SK-N-SH (cell line): ENCODE measurements at regions of chr15 and their contacts with region 1.

Region 1: DNA sequence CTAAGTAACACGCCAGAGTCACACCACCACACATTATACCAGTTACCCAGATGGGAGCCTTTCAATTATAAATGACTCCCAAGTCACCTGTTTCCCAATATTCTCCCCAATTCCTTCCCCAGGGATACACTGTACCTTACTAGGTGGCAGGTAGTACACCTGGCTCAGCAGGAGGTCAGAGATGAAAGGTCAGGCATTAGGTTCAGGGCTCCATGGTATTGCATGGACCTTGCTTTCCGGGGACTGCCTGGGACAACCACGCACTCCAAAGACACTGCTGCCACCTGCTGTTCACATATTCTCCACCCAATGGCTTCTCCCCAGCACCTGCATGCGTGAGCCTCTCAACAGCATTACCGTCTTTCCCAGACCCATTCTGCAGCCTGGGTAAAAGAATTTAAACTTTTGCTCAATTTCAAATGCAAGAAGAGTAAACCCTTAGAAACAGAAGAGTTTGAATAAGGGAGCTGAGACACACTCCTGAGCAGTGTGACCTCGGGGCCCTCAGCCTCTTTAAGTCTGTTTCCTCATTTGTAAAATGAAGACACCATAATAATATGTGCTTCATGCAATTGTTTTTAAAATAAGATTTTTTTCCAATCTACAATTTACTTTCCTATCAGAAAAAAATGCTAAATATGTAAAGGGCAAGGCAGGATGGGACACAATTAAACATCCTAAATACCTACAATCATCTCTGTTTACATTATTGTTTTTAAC is 28.0 kb upstream of the LACTB start:
- DNase-seq: peak; percentile 87
- H3K4me3 ChIP-seq: no peak overlapping the region; a peak in 1 of 4 replicates
- H3K27ac ChIP-seq: peak overlapping the region; percentile 68 to 78; a peak in 3 of 4 replicates
- H3K4me1 ChIP-seq: peaks cover 21 to 25% of the 10 kb centered on the region in 2 experiments; a peak in 3 of 4 replicates
- H3K27me3 ChIP-seq: no peaks in the 10 kb centered on the region
- CTCF ChIP-seq: peak; percentile 88
- EP300 ChIP-seq: no peak
- RAD21 ChIP-seq: peak; percentile 100

Region 2: DNA sequence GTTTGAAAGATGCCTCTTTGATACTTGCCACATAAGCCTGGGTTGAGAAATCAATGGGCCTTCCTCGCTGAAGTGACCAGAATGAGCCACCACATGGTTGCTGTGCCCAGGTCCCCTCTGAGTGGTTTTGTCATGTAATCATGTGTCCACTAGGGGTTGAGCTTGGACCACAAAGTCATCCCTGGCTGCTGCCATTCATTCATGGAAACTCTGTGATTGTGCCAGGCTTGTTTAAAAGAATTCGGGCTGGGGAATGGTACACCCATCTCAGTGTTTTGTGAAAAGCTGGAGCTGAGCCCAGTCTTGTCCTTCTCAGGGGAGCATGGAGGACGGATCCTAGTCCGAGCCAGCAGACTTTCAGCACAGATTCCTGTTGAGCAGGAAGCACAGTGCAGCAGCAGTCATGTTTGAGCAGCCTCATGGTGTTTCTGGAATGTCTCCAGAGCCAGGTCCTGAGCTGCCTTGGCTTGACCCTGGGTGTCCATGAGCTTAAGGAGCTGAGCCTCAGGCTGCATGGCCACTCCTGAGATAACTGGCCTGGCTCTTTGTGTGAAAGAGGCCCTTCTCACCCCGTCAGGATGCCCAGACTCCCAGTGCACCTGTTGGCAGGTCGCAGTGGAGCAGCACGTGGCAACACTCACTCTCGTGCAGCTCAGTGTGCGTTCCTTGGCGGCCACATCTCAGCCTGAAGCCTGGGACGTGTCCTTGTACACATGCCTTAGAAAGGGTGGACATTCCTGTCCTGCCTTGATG is 311.4 kb before region 1 on chr15:
- CTCF ChIA-PET with region 1: interaction called, 58 read pairs
- POLR2A ChIA-PET with region 1: interaction called, 4 read pairs
- DNase-seq: peak; percentile 83
- H3K4me3 ChIP-seq: no peak overlapping the region
- H3K27ac ChIP-seq: peak overlapping the region; percentile 76 to 96
- H3K4me1 ChIP-seq: peaks cover 22 to 51% of the 10 kb centered on the region in 2 experiments
- H3K27me3 ChIP-seq: no peaks in the 10 kb centered on the region
- CTCF ChIP-seq: peak; percentile 83
- EP300 ChIP-seq: no peak
- RAD21 ChIP-seq: peak; percentile 99

Region 3: GRCh38 chr15:62847900-62848489 is 245.7 kb before region 1 on chr15:
- CTCF ChIA-PET with region 1: interaction called, 22 read pairs
- POLR2A ChIA-PET with region 1: no interaction called
- DNase-seq: peak; percentile 62
- H3K4me3 ChIP-seq: no peak overlapping the region
- H3K27ac ChIP-seq: peak overlapping the region in 1 of 2 experiments; percentile 91; a peak in 2 of 4 replicates
- H3K4me1 ChIP-seq: peaks cover 14 to 34% of the 10 kb centered on the region in 2 experiments
- H3K27me3 ChIP-seq: no peaks in the 10 kb centered on the region
- CTCF ChIP-seq: peak; percentile 67
- EP300 ChIP-seq: no peak
- RAD21 ChIP-seq: peak; percentile 74

Region 4: GRCh38 chr15:63030101-63030551 is 63.5 kb before region 1 on chr15:
- CTCF ChIA-PET with region 1: no interaction called
- POLR2A ChIA-PET with region 1: no interaction called
- DNase-seq: no peak
- H3K4me3 ChIP-seq: no peak overlapping the region
- H3K27ac ChIP-seq: no peak overlapping the region
- H3K4me1 ChIP-seq: no peaks in the 10 kb centered on the region; a peak in 1 of 4 replicates
- H3K27me3 ChIP-seq: no peaks in the 10 kb centered on the region
- CTCF ChIP-seq: no peak
- EP300 ChIP-seq: no peak
- RAD21 ChIP-seq: no peak

Region 5: DNA sequence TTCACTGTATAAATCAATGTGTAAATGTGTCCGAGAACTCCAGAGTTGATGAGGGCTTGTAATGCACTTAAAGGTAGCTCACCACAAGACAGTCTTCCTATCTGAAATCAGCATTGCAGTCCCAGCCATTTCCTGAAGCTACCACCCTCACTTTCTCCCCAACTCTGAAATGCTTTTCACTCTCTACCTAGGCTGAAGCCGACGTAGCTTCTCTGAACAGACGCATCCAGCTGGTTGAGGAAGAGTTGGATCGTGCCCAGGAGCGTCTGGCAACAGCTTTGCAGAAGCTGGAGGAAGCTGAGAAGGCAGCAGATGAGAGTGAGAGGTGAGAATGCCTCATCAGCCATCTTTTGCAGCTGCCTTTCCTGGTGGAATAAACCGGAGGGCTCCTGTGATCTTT is 36.9 kb before region 1 on chr15:
- CTCF ChIA-PET with region 1: interaction called, 315 read pairs
- POLR2A ChIA-PET with region 1: interaction called, 3 read pairs
- DNase-seq: no peak
- H3K4me3 ChIP-seq: no peak overlapping the region
- H3K27ac ChIP-seq: peak overlapping the region; percentile 78 to 91
- H3K4me1 ChIP-seq: peaks cover 42 to 74% of the 10 kb centered on the region in 2 experiments
- H3K27me3 ChIP-seq: no peaks in the 10 kb centered on the region
- CTCF ChIP-seq: no peak
- EP300 ChIP-seq: no peak
- RAD21 ChIP-seq: no peak

Region 6: GRCh38 chr15:63079938-63080626 is 13.6 kb before region 1 on chr15:
- CTCF ChIA-PET with region 1: interaction called, 22 read pairs
- POLR2A ChIA-PET with region 1: no interaction called
- DNase-seq: no peak
- H3K4me3 ChIP-seq: no peak overlapping the region
- H3K27ac ChIP-seq: peak overlapping the region; percentile 17 to 24; a peak in 3 of 4 replicates
- H3K4me1 ChIP-seq: peaks cover 13 to 23% of the 10 kb centered on the region in 2 experiments; a peak in 3 of 4 replicates
- H3K27me3 ChIP-seq: no peaks in the 10 kb centered on the region
- CTCF ChIP-seq: no peak
- EP300 ChIP-seq: no peak
- RAD21 ChIP-seq: no peak

Region 7: DNA sequence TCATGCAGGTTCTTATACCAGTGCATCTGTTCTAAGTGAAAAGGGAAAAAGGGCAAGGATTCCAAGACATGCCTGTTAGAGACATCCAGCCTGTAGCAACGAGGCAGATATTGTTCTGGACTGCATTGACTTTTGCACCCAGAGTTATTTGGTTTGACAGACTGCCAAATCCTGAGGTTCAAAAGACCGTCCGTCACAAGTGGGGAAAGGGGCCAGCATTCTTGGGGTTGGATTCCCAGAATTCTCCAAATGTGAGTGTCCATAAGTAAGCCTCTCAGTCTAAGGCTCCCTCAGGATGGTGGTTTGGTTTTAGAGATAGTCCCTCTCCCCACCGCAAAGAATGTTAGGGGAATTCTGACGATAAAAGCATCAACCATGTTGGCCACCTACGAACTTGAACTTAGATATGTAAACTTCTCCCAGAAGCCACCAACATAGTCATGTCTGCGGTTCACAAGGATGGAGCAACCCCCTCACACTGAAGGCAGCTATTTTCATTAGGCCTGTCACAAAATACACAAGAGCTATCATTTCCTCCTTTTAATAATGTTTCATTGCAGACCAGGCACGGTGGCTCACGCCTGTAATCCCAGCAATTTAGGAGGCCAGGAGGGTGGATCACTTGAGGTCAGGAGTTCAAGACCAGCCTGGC is 14.4 kb after region 1 on chr15:
- CTCF ChIA-PET with region 1: interaction called, 24 read pairs
- POLR2A ChIA-PET with region 1: interaction called, 4 read pairs
- DNase-seq: no peak
- H3K4me3 ChIP-seq: no peak overlapping the region
- H3K27ac ChIP-seq: peak overlapping the region; percentile 34 to 85; a peak in 3 of 4 replicates
- H3K4me1 ChIP-seq: peaks cover 3 to 15% of the 10 kb centered on the region in 2 experiments; a peak in 3 of 4 replicates
- H3K27me3 ChIP-seq: no peaks in the 10 kb centered on the region
- CTCF ChIP-seq: no peak
- EP300 ChIP-seq: peak; percentile 38 to 96; a peak in 3 of 4 replicates
- RAD21 ChIP-seq: no peak